Activated T-helper 1 cell treated with anti-CD3 and anti-CD28 coated beads, Interleukin-12 subunit alpha, Interleukin-12 subunit beta, Interleukin-2, Interleukin-4 antibody, amounts not matched to agents 30 ng/mL and 10 ng/mL and 1 ng/mL, durations not matched to agents 14 hours and 24 hours and 36 hours (primary cell): ENCODE measurements at regions of chr13 and their contacts with region 1.

Region 1: DNA sequence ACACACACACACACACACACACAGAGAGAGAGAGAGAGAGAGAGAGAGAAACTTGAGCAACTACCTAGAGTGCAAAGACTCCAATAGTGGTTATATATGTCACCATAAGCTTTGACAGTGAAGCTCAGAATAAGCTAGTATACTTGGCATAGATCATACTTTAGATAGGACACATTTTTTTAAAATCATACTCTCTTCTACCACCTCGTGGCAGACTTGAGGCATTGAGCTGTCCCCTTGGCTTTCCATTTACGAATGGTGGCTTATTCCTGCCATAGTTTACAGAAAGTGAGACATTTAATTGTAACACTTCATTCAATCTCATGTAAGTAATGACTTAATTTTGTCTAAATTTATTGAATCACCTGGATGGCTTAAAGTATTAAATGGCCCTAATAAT is 108.2 kb downstream of the EDNRB start:
- DNase-seq: no peak
- H3K4me3 Mint-ChIP-seq: no peak overlapping the region
- H3K27ac Mint-ChIP-seq: no peak overlapping the region
- H3K4me1 Mint-ChIP-seq: no peaks in the 10 kb centered on the region
- H3K27me3 Mint-ChIP-seq: peaks cover 5% of the 10 kb centered on the region

Region 2: DNA sequence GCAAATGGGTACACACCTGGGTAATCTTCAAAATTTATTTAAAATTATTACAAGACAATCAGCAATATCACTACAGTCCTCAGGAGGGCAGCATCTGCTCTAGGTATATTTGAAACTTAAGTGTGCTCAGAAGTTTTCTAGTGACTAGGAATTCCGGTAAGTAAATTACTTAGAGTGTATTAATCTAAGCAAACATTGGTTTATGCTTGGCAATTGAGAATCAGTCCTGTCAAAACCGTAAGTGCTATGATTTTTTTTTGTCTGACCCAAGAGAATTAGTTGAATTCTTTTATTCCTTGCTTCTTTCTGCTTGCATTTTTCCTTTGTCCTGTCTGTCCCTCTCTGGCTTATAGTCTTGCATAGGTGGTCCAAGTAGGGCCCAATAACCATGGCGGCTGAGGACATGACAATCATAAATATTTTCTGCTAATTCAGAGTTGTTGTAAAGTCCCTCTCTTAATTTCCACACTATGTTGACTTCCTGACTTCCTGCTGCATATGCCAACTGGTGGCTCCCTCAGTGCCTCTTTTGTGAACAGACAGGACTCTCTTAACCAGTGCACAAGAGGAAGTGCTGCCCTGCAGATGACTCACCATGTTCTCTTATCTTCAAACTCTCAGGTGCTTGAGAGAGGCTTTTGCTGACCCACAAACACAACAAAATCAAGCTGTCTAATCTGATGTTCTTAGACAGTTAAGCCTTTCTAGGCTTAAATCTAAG is 30.7 kb before region 1 on chr13:
- intact Hi-C with region 1: loop called (anchors 2 kb)
- DNase-seq: no peak
- H3K4me3 Mint-ChIP-seq: no peak overlapping the region
- H3K27ac Mint-ChIP-seq: no peak overlapping the region
- H3K4me1 Mint-ChIP-seq: peaks cover 8% of the 10 kb centered on the region
- H3K27me3 Mint-ChIP-seq: peaks cover 3% of the 10 kb centered on the region